Heart right ventricle (tissue), 16 donors: ENCODE measurements at regions of chr3 and their contacts with region 1.

Region 1: DNA sequence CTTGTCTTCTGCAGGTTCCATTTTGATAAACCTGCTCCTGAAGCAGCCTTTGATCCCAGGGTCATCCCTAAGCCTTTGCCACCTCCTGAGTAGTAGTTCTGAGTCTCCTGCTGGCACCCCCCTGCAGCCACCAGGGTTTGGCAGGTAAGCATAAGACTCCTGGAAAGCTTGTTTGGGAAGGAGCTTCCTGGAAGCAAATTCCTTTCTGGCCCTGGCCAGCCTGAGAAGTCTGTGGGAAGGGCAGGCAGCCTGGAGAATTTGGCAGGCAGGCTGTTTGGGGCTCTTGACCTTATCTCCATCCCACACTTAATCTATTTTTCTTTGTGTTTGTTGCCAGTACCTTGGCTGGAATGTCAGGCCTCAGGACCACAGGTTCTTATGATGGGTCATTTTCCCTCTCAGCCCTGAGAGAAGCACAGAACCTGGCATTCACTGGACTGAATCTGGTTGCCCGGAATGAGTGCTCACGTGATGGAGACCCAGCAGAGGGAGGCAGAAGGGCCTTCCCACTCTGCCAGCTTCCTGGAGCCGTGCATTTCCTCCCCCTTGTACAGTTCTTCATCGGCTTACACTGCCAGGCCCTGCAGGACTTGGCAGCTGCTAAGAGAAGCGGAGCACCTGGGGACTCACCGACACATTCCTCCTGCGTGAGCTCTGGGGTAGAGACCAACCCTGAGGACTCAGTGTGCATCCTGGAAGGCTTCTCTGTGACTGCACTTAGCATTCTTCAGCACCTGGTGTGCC is 13.4 kb downstream of the ATRIP start:
- DNase-seq: no peak
- ATAC-seq: no peak
- H3K4me3 ChIP-seq: no peak overlapping the region
- H3K27ac ChIP-seq: no peak overlapping the region
- H3K4me1 ChIP-seq: peaks cover 2 to 7% (median 5%) of the 10 kb centered on the region in 9 donors
- H3K27me3 ChIP-seq: no peaks in the 10 kb centered on the region
- CTCF ChIP-seq: no peak

Region 2: GRCh38 chr3:48088749-48089466 is 371.0 kb before region 1 on chr3:
- intact Hi-C with region 1: no loop called
- DNase-seq: peak; percentile 96 to 97
- ATAC-seq: peak; percentile 94 to 98 (median 96)
- H3K4me3 ChIP-seq: peak overlapping the region; percentile 66 to 99 (median 90)
- H3K27ac ChIP-seq: peak overlapping the region; percentile 96 to 99 (median 98)
- H3K4me1 ChIP-seq: peaks cover 10 to 46% (median 43%) of the 10 kb centered on the region in 9 donors
- H3K27me3 ChIP-seq: no peaks in the 10 kb centered on the region
- CTCF ChIP-seq: no peak

Region 3: GRCh38 chr3:48492543-48493501 is 32.9 kb after region 1 on chr3:
- intact Hi-C with region 1: no loop called
- DNase-seq: no peak
- ATAC-seq: no peak
- H3K4me3 ChIP-seq: no peak overlapping the region
- H3K27ac ChIP-seq: no peak overlapping the region
- H3K4me1 ChIP-seq: no peaks in the 10 kb centered on the region
- H3K27me3 ChIP-seq: no peaks in the 10 kb centered on the region
- CTCF ChIP-seq: no peak

Region 4: DNA sequence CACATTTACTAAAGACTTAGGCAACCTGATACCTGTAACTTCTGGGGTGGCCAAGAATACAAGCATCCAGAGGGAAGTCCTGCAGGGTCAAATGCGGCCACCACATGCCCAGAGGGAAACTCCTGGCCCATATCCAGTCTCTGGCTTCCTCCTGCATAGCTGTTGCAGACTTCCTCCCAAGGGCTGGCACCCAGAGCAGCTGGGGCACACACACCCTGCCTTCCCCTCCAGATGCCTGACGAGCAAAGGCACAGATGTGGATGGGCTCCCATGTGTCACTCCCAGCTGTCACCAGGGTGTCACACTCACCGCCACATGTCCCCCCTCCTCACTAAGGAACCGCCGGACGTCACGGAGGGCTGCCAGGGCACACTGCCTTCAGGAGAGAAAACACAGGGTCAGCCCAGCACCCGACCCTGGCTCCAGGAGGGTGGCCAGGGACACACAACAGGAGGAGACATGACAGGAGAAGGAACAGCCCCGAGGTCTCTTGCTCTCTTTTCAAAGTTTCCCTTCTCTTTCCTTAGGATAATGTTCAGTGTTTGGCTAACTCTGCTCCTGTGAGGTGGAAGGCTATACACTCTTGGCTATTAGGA is 83.4 kb after region 1 on chr3:
- intact Hi-C with region 1: loop called (anchors 1 to 5 kb)
- DNase-seq: peak; percentile 52 to 58
- ATAC-seq: peak; percentile 67 to 89 (median 78)
- H3K4me3 ChIP-seq: no peak overlapping the region
- H3K27ac ChIP-seq: no peak overlapping the region
- H3K4me1 ChIP-seq: peaks cover 0 to 19% (median 4%) of the 10 kb centered on the region in 9 donors
- H3K27me3 ChIP-seq: no peaks in the 10 kb centered on the region
- CTCF ChIP-seq: no peak

Region 5: GRCh38 chr3:48859206-48859605 is 399.3 kb after region 1 on chr3:
- intact Hi-C with region 1: no loop called
- DNase-seq: no peak
- ATAC-seq: peak in 1 of 8 donors; percentile 50
- H3K4me3 ChIP-seq: no peak overlapping the region
- H3K27ac ChIP-seq: no peak overlapping the region
- H3K4me1 ChIP-seq: no peaks in the 10 kb centered on the region
- H3K27me3 ChIP-seq: no peaks in the 10 kb centered on the region
- CTCF ChIP-seq: no peak